Heart left ventricle (tissue), 16 donors: ENCODE measurements at regions of chr11 and their contacts with region 1.

Region 1: DNA sequence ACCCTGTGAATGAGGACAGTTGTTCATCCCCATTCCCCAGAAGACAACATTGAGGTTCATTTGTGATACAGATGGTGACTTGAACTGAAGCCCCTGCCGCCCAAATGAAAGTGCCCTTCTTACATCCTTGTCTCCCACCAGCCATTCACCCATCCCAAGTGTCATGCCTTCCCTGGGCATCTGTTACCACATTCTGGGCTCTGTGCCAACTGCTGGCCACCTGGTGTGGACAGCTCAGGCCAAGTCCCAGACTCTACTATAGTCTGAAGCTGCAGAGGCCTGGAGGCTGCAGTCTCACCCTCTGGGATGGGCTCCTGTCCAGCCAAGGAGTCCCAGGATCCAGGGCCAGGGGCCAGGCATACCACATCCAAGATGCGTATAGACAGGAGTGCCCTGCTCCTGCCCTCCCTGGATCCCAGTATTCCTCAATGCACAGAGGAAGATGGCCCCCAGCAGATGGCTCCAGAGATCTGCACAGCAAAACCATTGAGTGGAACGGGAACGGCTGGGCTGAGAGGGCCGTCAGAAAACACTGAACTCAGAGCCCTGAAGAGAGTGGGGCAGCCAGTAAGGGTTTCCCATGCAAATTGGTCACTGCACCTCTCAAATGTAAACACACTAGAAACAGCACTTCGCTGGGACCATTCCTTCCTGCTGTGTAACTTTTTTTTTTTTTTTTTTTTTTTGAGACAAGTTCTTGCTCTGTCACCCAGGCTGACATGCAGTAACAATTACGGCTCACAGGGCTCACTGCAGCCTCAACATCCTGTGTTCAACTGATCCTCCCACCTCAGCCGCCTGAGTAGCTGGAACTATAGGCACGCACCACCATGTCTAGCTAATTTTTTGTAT is 22.8 kb downstream of the ARRB1 start:
- DNase-seq: peak; percentile 68 to 79 (median 71)
- ATAC-seq: peak; percentile 68 to 86 (median 82)
- H3K4me3 ChIP-seq: no peak overlapping the region
- H3K27ac ChIP-seq: peak overlapping the region in 3 of 12 donors; percentile 5 to 60 (median 53)
- H3K4me1 ChIP-seq: peaks cover 0 to 68% (median 21%) of the 10 kb centered on the region in 12 donors
- H3K27me3 ChIP-seq: no peaks in the 10 kb centered on the region
- CTCF ChIP-seq: peak; percentile 57 to 80 (median 69)
- POLR2A ChIP-seq: no peak

Region 2: DNA sequence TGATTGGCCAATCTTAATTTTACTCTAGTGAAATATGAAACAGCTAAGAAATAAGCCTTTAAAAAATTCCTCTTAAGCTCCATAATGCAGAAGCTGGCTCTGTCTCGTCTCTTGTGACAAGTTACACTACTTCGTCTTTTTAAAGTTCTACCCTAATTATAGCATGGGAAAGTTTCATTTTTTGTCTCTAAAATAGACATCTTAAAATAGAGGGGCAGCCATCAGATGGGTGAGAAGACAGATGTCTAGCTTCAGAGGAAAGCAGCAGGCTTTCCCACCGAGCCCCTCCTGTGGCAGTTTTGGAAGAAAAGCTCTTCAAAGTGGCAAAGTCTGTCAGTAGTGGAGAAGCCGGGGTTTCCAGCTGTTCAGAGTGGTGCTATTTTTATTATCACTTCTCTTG is 419.3 kb before region 1 on chr11:
- intact Hi-C with region 1: no loop called
- DNase-seq: no peak
- ATAC-seq: no peak
- H3K4me3 ChIP-seq: no peak overlapping the region
- H3K27ac ChIP-seq: peak overlapping the region in 4 of 12 donors; percentile 31 to 73 (median 60)
- H3K4me1 ChIP-seq: peaks cover 0 to 28% (median 10%) of the 10 kb centered on the region in 12 donors
- H3K27me3 ChIP-seq: no peaks in the 10 kb centered on the region
- CTCF ChIP-seq: no peak
- POLR2A ChIP-seq: no peak

Region 3: GRCh38 chr11:75286826-75287465 is 41.7 kb before region 1 on chr11:
- intact Hi-C with region 1: loop called in 7 of 10 experiments (anchors 5 kb)
- DNase-seq: peak in 1 of 5 donors; percentile 33
- ATAC-seq: peak in 1 of 4 donors; percentile 21
- H3K4me3 ChIP-seq: no peak overlapping the region
- H3K27ac ChIP-seq: no peak overlapping the region
- H3K4me1 ChIP-seq: peaks cover 0 to 5% (median 0%) of the 10 kb centered on the region in 12 donors
- H3K27me3 ChIP-seq: no peaks in the 10 kb centered on the region
- CTCF ChIP-seq: no peak
- POLR2A ChIP-seq: no peak

Region 4: DNA sequence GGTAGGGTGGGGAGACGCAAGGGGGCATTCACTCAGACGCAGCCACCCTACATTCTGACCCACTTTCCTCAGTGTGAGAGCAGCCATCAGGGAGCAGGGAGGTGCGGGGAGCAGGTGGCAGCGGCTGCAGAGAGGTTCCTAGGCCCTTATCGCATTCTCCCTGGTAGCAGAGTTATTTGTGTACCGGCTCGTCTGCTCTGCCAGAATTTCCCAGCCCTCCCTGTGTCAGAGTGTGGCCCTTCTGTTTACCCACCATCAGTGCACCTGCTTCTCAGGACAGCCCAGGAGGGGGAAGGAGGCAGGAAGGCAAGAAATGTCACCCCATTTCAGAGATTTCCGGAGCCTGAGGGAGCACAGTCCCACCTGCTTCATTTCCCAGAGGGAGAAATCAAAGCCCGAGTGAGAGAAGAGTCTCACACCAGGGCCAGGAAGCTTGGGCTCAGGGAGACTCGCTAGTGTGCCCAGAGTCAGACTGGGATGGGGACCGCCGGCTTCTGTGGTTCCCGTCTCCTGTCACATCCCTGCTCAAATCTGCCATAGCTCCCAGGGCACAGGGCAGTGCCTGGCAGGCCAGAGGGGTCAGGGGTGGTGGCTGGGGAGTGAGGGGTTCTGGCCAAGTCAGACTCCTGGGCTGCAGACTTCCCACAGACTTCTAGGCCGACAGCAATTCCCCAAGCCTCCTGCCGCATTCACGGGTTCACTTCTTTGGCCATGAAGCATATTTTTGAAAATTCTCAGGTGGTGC is 26.9 kb before region 1 on chr11:
- intact Hi-C with region 1: no loop called
- DNase-seq: peak in 2 of 5 donors; percentile 37 to 61
- ATAC-seq: peak; percentile 74 to 88 (median 86)
- H3K4me3 ChIP-seq: no peak overlapping the region
- H3K27ac ChIP-seq: peak overlapping the region in 10 of 12 donors; percentile 39 to 66 (median 56)
- H3K4me1 ChIP-seq: peaks cover 5 to 36% (median 18%) of the 10 kb centered on the region in 12 donors
- H3K27me3 ChIP-seq: no peaks in the 10 kb centered on the region
- CTCF ChIP-seq: no peak
- POLR2A ChIP-seq: no peak

Region 5: DNA sequence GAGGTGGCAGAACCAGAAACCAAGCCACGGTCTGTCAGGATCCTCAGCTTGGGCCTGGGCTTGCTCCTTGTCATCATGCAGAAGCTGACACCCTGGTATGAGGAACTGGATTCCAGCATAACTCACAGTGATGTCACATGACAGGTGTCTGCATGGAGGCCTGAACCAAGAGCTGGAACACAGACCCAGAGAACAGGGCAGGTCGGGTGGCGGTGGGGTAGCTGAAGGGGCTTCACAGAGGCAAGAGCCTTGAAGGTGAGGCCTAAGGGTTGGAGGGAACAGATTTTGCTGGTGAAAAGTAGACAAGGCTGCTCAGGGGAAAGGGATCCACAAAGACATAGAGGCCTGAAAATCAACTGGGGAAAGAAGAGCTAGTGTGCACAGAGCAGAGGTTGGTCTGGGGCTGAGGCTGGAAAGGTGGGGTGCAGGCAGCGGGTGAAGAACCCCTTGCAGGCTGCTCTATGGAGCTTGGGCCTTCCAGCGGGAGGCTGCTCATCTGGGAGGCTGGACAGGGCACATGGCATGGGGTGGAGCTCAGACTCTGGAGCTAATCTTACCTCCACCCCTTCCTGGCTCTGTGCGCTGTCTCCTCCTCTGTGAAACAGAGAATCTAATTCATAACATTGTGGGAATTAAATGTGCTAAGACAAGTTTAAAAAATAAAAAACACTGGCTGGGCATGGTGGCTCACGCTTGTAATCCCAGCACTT is 52.2 kb after region 1 on chr11:
- intact Hi-C with region 1: loop called in 9 of 10 experiments (anchors 1 to 5 kb)
- DNase-seq: peak in 2 of 5 donors; percentile 27 to 45
- ATAC-seq: peak in 3 of 4 donors; percentile 68 to 82 (median 75)
- H3K4me3 ChIP-seq: no peak overlapping the region
- H3K27ac ChIP-seq: peak overlapping the region in 1 of 12 donors; percentile 29
- H3K4me1 ChIP-seq: peaks cover 0 to 29% (median 2%) of the 10 kb centered on the region in 12 donors
- H3K27me3 ChIP-seq: peaks cover 0 to 4% (median 0%) of the 10 kb centered on the region in 9 donors
- CTCF ChIP-seq: no peak
- POLR2A ChIP-seq: no peak

Region 6: DNA sequence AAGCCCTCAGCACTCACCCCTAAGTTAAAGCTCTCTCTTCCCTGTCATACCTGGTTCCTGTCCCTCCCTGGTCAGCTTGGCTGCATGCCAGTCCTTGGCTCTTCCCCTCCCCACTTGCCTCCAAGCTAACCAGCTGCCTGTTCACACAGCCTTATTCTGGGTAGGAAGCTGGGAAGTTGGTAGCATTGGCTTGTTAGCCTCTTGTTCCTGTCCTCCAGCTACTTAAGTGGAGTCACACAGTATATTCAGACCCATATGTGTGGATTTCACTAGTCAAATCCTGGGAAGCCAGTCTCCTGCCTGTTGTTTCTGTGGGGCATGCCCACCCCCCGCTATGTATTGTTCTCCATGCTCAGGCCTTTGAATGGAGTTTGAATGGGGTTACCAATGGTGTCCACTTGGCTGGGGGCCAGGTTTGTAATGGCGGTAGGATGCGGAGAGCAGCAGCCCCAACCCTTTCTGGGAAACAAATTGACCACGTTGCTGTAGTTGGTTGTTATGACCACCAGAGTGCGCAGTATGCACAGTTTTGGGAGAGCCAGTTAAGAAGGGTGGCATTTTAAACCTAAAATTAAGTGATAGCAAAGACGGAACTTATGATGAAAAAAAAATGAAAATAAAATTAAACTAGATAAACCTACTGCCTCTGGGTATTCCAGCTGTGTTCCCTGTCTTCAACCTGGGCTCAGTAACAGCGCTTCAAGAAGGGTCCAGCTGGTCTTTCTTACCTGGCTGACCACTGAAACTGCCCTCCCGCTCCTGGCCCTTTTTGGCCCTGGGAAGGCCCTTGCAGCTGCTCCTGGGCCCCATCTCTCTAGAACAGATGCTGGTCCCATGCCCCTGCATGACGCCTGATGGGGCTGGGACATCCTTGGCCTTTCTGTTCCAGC is 60.0 kb after region 1 on chr11:
- intact Hi-C with region 1: loop called in 9 of 10 experiments (anchors 1 to 5 kb)
- DNase-seq: peak; percentile 54 to 77 (median 68)
- ATAC-seq: peak; percentile 35 to 76 (median 72)
- H3K4me3 ChIP-seq: no peak overlapping the region
- H3K27ac ChIP-seq: no peak overlapping the region
- H3K4me1 ChIP-seq: peaks cover 0 to 23% (median 5%) of the 10 kb centered on the region in 12 donors
- H3K27me3 ChIP-seq: peaks cover 0 to 4% (median 0%) of the 10 kb centered on the region in 9 donors
- CTCF ChIP-seq: peak; percentile 75 to 88 (median 80)
- POLR2A ChIP-seq: no peak

Region 7: GRCh38 chr11:75399344-75400145 is 70.9 kb after region 1 on chr11 and contains the start of gene RPS3:
- intact Hi-C with region 1: no loop called
- DNase-seq: peak; percentile 92 to 95 (median 94)
- ATAC-seq: peak; percentile 91 to 98 (median 97)
- H3K4me3 ChIP-seq: peak within 1 kb of the TSS; percentile 55 to 96 (median 76)
- H3K27ac ChIP-seq: peak within 1 kb of the TSS; percentile 81 to 95 (median 88)
- H3K4me1 ChIP-seq: peaks cover 0 to 35% (median 26%) of the 10 kb centered on the region in 12 donors
- H3K27me3 ChIP-seq: no peaks in the 10 kb centered on the region
- CTCF ChIP-seq: peak in 3 of 12 donors; percentile 30 to 44 (median 35)
- POLR2A ChIP-seq: peak in 1 of 2 donors; percentile 92
- total RNA-seq, gene RPS3: 434 to 1,232 (median 990) TPM